ENCODE measurements at regions of chr6 and their contacts with region 1.

Region 1: GRCh38 chr6:88586371-88587149 is 376.9 kb downstream of the RNGTT start:
- DNase-seq: peak; percentile 80 to 87
- ATAC-seq: peak; percentile 78
- H3K4me3 ChIP-seq: no peak overlapping the region
- H3K27ac ChIP-seq: peak overlapping the region in 1 of 2 donors; percentile 45
- H3K4me1 ChIP-seq: no peaks in the 10 kb centered on the region
- H3K27me3 ChIP-seq: no peaks in the 10 kb centered on the region

Region 2: DNA sequence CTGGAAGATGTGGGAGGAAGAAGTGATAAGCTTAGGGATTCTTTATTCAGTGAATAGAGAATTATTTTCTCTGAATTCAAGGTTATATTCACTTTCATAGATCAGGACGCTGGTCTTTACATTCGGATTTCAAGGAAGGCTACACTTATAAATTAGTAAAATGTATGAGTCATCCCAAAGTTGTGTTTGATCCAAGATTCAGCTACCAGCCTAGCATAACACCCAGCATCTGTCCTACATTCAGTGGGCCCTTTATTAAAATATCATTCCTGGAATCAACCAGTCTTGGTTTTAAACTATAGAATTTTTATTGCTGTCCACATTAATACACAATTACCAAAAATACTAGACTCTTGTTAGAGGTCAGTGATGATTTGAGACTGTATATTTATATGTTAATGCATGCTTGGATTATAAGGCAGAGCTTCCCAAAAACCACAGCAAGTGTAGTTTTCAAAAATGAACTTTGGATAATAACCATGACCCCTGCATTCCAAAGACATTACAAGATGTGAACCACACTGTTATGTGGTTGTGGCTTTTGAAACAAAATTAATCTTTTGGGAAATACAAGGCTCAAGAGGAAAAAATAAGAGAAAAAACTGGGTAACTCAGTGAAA is 209.7 kb before region 1 on chr6:
- intact Hi-C with region 1: loop called in 1 of 2 experiments (anchors 10 kb)
- DNase-seq: no peak
- ATAC-seq: no peak
- H3K4me3 ChIP-seq: no peak overlapping the region
- H3K27ac ChIP-seq: peak overlapping the region in 1 of 2 donors; percentile 76
- H3K4me1 ChIP-seq: peaks cover 2 to 7% of the 10 kb centered on the region in 2 donors
- H3K27me3 ChIP-seq: no peaks in the 10 kb centered on the region